ENCODE measurements at regions of chr4 and their contacts with region 1.

Region 1: DNA sequence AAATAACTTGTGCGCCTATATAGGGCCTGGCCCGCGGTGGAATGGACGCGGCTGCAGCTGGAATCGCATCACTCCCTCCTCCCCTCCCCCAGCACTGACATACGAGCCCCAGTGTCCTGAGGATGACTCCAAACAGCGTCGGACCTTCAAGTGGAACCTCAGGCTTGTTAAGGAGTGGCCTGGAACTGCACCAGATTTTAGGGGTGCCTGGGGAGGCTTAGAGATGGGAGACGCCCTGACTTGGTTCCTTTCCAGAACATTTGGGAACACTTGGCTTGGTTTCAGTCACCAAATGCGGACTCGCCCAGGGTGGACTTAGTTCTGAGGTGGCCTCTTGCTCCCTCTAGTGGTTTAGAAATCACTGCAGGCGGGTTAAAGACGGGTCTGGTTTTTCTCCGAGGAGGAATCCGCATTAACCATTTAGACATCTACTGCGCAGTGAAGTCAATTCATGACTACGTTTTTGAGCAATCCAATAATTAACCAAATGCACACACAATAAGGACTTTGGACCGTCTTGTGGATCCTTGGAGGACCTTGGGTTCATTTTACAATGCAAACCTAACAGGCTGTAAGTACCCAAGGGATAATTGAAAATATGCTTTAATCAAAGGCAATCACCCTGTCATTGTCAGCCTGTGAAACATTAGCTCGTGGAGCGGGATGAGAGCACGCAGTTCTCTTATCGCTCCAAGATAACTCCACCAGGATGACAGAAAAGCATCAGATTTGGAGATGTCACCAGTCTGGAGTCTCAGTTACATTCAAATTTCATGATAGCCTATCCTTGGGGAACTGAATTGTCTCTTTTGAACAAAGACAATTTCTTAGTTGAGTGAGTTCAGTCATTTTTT is 11.2 kb upstream of the PDGFRA start:
- DNase-seq: peak; percentile 65 to 67
- ATAC-seq: peak; percentile 90

Region 2: DNA sequence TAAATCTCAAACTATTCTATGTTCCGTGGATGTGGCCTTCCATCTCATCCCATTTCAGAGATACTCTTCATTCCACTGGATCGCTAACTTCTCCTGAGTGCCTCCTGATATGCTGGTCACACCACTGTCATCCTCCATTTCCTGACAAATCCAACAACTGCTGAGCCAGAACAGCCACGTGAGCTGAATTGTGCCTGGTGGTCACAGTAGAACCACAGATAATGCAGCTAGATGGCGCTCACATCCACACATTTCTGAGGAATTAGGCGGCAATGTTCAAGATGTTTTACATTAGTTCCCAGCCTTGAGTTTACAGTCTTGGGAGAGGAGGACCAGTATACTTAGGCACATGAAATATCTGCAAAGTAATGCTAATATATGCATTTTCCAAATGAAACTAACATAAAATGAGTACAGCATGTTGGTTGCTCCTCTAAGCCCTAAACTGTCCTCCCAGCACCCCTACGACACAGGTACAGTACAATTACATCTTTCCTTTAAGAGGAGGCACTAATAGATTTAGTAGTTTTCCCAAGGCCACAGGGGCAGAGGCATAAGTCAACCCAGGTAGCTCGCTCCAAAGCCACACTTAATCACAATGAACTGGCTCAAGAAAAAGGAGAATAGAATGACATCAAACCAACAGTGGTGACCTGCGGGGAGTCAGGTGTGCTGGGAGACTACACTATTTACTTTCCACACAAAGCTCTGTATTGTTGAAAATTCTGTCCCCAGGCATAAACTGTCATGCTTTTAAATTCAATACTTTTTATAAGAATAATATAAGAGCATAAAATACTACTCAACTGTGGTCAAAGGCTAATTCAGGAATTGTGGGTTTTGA is 287.7 kb before region 1 on chr4:
- intact Hi-C with region 1: loop called (anchors 5 to 10 kb)
- DNase-seq: peak; percentile 63 to 75
- ATAC-seq: peak; percentile 88

Region 3: GRCh38 chr4:54482529-54483200 is 264.8 kb after region 1 on chr4:
- intact Hi-C with region 1: no loop called
- DNase-seq: no peak
- ATAC-seq: no peak

Measured in left colon (tissue), 2 donors.